Activated CD4-positive, alpha-beta T cell treated with anti-CD3 and anti-CD28 coated beads for 36 hours (primary cell): ENCODE measurements at regions of chr6 and their contacts with region 1.

Region 1: DNA sequence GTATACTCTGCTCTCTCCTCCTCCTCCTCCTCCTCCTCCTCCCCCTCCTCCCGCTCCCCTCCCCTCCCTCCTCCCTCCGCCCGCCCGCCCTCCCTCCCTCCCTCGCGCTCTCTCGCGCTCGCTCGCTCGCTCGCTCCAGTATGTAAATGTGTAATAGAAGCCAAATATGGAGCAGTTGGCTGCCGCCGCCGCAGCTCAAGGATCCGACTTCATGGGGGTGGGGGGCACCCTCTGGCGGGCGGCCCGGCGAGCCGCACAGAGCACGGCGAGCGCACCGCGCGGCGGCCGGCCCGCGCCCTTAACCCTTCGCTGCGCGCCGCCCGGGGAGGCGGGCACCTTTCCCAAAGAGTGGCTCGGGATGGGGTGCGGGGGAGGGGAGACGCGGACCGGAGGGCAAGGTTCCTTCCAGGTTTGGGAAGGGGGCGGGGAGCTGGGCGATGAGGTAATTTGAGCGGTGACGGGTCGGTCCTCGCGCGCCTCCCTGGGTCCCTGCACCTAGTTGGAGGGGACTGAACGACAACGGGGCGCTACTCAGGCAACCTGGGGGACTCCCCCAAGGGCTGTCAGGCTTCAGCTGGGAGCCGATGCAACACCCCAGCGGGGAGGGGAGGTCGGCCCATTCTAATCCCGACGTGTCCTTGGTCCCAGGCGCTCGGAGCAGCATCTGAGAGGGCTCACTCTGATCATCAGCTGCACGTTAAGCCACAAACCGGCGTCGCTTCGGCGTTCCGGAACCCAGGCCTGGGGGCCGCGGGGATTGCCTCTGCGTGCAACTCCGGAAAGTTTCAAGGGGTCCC is 409 bp upstream of the ATXN1 start:
- DNase-seq: peak; percentile 91
- ATAC-seq: peak; percentile 60
- H3K4me3 Mint-ChIP-seq: peak overlapping the region; percentile 91
- H3K27ac Mint-ChIP-seq: peak overlapping the region; percentile 94
- H3K4me1 Mint-ChIP-seq: peaks cover 58% of the 10 kb centered on the region
- H3K27me3 Mint-ChIP-seq: no peaks in the 10 kb centered on the region

Region 2: DNA sequence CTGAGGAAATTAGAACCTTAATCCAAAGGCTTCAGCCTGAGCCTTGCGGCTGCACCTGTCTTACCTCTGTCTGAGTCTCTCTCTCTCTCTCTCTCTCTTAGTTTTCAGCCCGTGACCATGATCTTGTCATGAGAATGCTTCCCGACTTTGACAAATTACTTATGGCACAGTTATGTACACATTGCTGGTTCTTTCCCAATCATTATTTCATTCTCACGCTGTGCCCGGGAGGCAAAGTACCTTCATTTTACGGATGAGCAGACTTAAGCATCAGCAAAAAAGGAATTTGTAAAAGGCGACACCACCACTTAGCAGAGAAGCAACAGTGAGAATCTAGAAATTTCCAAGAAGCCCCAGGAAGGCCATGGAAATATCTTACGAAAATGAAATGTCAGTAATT is 468.7 kb before region 1 on chr6:
- CTCF ChIA-PET with region 1: no interaction called
- POLR2A ChIA-PET with region 1: no interaction called
- intact Hi-C with region 1: no loop called
- DNase-seq: no peak
- ATAC-seq: no peak
- H3K4me3 Mint-ChIP-seq: no peak overlapping the region
- H3K27ac Mint-ChIP-seq: no peak overlapping the region
- H3K4me1 Mint-ChIP-seq: no peaks in the 10 kb centered on the region
- H3K27me3 Mint-ChIP-seq: no peaks in the 10 kb centered on the region

Region 3: DNA sequence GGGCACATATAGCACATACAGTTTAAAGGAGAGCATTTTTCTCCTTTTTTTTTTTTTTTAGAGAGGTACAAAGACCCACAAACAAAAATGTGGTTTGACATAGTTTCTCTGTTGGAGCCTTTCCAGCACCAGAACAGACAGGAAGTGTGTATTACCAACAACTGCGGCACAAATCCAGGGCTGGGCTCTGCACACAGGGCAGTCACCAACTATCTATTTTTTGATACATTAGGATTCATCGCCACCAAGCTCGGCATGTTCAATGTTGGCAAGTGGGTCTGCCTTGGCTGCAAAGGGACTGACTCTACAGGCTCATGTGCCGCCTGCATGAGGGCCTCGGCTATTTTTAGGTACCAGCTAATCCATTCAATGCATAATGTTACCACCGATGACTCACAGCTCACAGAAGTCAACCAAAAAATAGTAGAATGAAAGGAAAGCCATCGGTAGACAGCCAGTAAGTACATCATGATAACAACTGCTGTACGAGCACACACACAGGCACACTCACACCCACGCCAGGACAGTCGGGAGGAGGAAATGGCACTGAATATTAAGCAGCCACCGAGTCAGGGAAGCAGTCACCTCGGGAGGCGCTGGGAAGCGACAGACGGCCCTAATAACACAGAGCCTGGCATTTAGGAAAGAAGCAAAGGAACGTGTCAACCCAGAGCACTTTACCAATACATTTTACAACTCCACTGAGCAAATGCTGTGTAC is 441.7 kb before region 1 on chr6:
- CTCF ChIA-PET with region 1: interaction called, 3 read pairs
- POLR2A ChIA-PET with region 1: interaction called, 3 read pairs
- intact Hi-C with region 1: loop called (anchors 1 to 2 kb)
- DNase-seq: peak; percentile 80
- ATAC-seq: peak; percentile 62
- H3K4me3 Mint-ChIP-seq: peak overlapping the region; percentile 67
- H3K27ac Mint-ChIP-seq: peak overlapping the region; percentile 93
- H3K4me1 Mint-ChIP-seq: peaks cover 76% of the 10 kb centered on the region
- H3K27me3 Mint-ChIP-seq: no peaks in the 10 kb centered on the region

Region 4: DNA sequence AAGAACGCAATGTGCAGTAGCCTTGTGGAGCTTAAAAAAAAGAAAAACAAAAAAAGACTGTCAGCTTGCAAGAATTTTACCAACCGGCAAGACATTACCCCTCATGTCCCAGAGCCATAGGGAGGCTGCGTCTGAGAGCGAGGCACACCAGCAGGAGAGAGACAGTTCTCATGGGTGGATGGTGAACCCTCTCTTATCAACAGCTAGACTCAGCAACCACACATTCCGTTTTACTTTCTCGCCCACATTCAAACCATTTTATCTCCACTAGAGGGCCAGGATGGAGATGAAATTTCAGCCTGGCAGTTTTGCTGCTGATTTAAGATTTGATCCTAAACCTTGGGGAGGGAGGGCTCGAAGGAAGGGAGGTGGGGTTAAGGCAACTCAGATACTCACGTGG is 247.4 kb before region 1 on chr6:
- CTCF ChIA-PET with region 1: interaction called, 53 read pairs
- POLR2A ChIA-PET with region 1: interaction called, 5 read pairs
- intact Hi-C with region 1: loop called (anchors 1 to 5 kb)
- DNase-seq: peak; percentile 37
- ATAC-seq: peak; percentile 43
- H3K4me3 Mint-ChIP-seq: no peak overlapping the region
- H3K27ac Mint-ChIP-seq: no peak overlapping the region
- H3K4me1 Mint-ChIP-seq: peaks cover 69% of the 10 kb centered on the region
- H3K27me3 Mint-ChIP-seq: no peaks in the 10 kb centered on the region

Region 5: GRCh38 chr6:16670183-16670582 is 91.5 kb before region 1 on chr6:
- CTCF ChIA-PET with region 1: interaction called, 3 read pairs
- POLR2A ChIA-PET with region 1: no interaction called
- intact Hi-C with region 1: loop called (anchors 1 kb)
- DNase-seq: no peak
- ATAC-seq: peak; percentile 38
- H3K4me3 Mint-ChIP-seq: peak overlapping the region; percentile 7
- H3K27ac Mint-ChIP-seq: peak overlapping the region; percentile 87
- H3K4me1 Mint-ChIP-seq: peaks cover 63% of the 10 kb centered on the region
- H3K27me3 Mint-ChIP-seq: no peaks in the 10 kb centered on the region

Region 6: DNA sequence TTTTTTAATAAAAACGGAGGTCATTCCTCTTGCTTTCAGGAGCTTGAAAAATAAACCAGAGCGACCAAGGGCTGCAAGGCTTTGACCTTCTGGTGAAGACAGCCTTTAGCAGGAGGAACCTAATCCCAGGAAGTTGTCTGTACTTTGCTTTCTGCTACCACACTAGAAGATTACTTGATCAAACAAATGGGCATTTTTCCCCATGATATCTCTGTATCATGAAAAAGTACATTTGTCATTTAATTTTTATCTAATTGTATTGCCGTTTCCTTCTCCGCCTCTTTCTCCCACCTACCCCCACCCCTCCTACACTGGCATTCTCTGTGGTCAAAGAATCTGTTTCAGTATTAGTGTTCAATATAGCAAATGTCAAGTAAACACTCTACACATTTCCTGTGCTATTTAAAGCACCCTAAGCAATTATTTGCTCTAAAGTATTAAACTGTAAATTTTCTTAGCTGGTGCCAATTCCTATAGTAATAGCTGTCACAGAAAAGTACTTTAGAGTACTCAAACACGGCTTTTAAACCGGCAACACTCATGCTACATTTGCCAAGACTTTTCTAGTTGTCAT is 30.1 kb before region 1 on chr6:
- CTCF ChIA-PET with region 1: interaction called, 5 read pairs
- POLR2A ChIA-PET with region 1: interaction called, 3 read pairs
- intact Hi-C with region 1: loop called in 1 of 2 experiments (anchors 2 kb)
- DNase-seq: peak; percentile 57
- ATAC-seq: peak; percentile 67
- H3K4me3 Mint-ChIP-seq: peak overlapping the region; percentile 26
- H3K27ac Mint-ChIP-seq: peak overlapping the region; percentile 65
- H3K4me1 Mint-ChIP-seq: peaks cover 57% of the 10 kb centered on the region
- H3K27me3 Mint-ChIP-seq: no peaks in the 10 kb centered on the region

Region 7: DNA sequence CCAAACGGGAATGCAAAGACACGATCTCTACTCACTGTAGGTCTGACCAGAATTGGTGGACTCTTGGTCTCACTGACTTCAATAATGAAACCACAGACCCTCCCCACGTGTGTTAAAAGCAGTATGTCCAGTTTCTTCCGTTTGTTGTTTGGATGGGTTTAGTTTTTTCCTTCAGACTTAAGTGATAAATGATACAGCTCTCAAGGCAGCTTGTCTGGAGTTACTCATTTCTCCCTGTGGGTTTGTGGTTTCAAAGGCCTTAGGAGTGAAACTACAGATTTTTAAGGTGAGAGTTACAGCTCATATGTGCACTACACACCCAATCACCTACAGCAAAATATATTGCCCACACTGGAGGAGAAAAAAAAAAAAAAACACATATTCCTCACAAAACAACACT is 253.5 kb after region 1 on chr6:
- CTCF ChIA-PET with region 1: interaction called, 6 read pairs
- POLR2A ChIA-PET with region 1: interaction called, 3 read pairs
- intact Hi-C with region 1: loop called in 1 of 2 experiments (anchors 2 kb)
- DNase-seq: peak; percentile 47
- ATAC-seq: peak; percentile 92
- H3K4me3 Mint-ChIP-seq: peak overlapping the region; percentile 36
- H3K27ac Mint-ChIP-seq: peak overlapping the region; percentile 38
- H3K4me1 Mint-ChIP-seq: peaks cover 17% of the 10 kb centered on the region
- H3K27me3 Mint-ChIP-seq: peaks cover 27% of the 10 kb centered on the region

Region 8: GRCh38 chr6:17101422-17102257 is 340.0 kb after region 1 on chr6 and contains the start of gene STMND1:
- CTCF ChIA-PET with region 1: no interaction called
- POLR2A ChIA-PET with region 1: no interaction called
- intact Hi-C with region 1: no loop called
- DNase-seq: peak; percentile 18
- ATAC-seq: peak; percentile 36
- H3K4me3 Mint-ChIP-seq: peak within 1 kb of the TSS; percentile 60
- H3K27ac Mint-ChIP-seq: no peak within 1 kb of the TSS
- H3K4me1 Mint-ChIP-seq: peaks cover 6% of the 10 kb centered on the region
- H3K27me3 Mint-ChIP-seq: peaks cover 59% of the 10 kb centered on the region
- total RNA-seq, gene STMND1: not detected